Ascending aorta (tissue), 2 donors: ENCODE measurements at regions of chr2 and their contacts with region 1.

Region 1: DNA sequence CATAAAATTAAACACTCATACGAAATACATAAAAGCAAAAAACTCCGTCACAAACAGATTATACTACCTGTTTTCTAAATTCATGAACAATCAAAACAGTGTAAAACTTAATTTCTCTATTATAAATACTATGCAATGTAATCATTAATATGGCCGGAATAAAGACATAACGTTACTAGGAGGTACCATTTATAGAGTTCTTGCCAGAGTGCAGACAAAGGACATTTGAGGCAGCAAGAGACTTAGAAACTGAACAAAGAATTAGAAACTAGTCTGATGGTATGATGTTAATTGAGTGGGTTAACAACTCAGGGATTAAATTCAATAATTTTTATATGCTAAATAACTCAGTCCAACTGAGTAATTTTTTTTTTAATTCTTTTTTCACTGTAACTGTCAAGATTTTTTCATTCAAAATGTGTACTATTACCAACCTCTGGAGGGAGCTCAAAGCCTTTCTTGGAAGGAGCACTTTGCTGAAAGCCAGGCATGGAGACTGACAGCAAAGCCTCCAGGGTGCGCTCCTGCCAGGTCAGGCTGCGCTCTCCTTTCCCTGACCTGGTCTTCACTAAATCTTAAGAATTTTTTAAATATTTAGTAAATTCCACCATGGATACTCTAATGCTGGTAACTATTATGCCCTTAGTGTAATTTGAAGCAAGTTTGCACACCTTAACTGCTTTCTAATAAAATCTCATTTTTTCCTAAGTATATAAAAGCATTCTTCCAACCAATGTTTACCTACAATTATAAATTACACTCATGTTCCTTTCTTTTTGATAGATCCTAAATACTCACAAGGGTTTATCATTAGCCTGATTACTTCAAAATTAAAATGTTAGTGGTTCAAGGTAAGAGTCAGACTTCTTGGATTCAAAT is 34.1 kb downstream of the WDR35 start:
- DNase-seq: no peak
- H3K4me3 ChIP-seq: no peak overlapping the region
- H3K27ac ChIP-seq: no peak overlapping the region
- H3K4me1 ChIP-seq: no peaks in the 10 kb centered on the region
- H3K27me3 ChIP-seq: no peaks in the 10 kb centered on the region
- CTCF ChIP-seq: peak; percentile 32 to 79 (median 54)

Region 2: DNA sequence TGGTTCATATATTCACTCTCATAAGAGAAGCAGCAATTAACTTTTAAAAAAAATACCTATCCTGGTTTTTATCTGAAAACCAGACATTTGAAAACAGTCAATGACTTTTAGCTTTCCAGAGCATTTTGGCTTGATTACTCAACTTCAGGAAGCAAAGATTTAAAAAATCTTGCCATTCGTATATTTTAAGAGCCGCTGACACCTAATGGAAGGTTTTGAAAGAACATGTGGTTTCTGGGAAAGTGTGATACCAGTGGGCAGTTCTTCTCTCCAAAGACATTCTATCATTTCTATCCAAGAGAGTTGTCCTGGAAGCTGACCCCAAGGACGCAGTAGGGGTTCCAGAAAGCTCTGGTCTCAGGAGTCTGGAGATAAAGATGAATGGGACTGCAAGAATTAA is 288.7 kb before region 1 on chr2:
- intact Hi-C with region 1: no loop called
- DNase-seq: no peak
- H3K4me3 ChIP-seq: no peak overlapping the region
- H3K27ac ChIP-seq: peak overlapping the region; percentile 17 to 31
- H3K4me1 ChIP-seq: peaks cover 4 to 11% of the 10 kb centered on the region in 2 donors
- H3K27me3 ChIP-seq: no peaks in the 10 kb centered on the region
- CTCF ChIP-seq: peak in 2 of 3 experiments; percentile 20 to 24

Region 3: GRCh38 chr2:20040489-20041172 is 84.8 kb after region 1 on chr2:
- intact Hi-C with region 1: no loop called
- DNase-seq: no peak
- H3K4me3 ChIP-seq: no peak overlapping the region
- H3K27ac ChIP-seq: no peak overlapping the region
- H3K4me1 ChIP-seq: peaks cover 14 to 27% of the 10 kb centered on the region in 2 donors
- H3K27me3 ChIP-seq: no peaks in the 10 kb centered on the region
- CTCF ChIP-seq: no peak

Region 4: GRCh38 chr2:20097879-20098714 is 142.3 kb after region 1 on chr2:
- intact Hi-C with region 1: loop called (anchors 1 kb)
- DNase-seq: peak in 1 of 2 donors; percentile 90
- H3K4me3 ChIP-seq: no peak overlapping the region
- H3K27ac ChIP-seq: no peak overlapping the region
- H3K4me1 ChIP-seq: no peaks in the 10 kb centered on the region
- H3K27me3 ChIP-seq: no peaks in the 10 kb centered on the region
- CTCF ChIP-seq: peak; percentile 87 to 94 (median 87)